Mammary epithelial cell (primary cell): ENCODE measurements at regions of chr4 and their contacts with region 1.

Region 1: DNA sequence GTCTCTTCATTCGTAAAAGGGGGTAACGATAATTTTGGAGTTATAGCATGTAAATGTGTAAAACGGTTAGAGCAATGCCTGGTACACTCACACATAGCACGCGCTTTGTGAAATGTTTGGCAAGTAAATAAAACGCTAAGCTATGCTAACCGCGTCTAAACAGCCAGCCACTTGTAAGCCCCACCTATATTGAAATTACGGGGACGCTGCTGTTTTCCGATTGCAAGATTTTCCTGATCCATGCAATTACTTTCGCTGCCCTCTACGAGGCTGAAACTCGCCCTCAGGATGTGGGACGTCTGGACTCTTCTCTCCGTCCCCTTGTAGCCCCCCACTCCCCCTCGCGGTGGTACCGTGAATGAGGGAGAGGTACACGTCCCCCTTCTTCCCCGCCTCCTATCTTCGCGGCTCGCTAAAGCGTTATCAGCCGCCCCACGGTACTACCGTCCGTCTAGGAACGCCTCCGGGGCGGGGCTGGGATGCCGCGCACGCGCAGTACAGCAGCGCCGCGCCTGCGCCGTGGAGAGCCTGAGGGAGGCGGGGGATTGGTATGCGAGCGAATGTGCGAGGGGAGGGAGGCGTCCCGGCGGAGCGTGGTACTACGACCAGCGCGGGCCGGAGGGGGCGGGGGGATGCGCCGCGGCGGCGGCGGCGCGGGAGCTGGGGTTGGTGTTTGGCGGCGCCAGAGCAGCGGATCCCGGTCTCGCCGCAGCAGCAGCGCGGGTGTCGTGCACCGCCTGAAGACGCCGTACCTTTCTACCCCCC is at the start of gene STIM2:
- DNase-seq: peak; percentile 97
- H3K4me3 ChIP-seq: peak within 1 kb of the TSS; percentile 61 to 80 (median 77)
- H3K27ac ChIP-seq: peak within 1 kb of the TSS; percentile 64
- H3K4me1 ChIP-seq: peaks cover 28% of the 10 kb centered on the region
- H3K27me3 ChIP-seq: no peaks in the 10 kb centered on the region
- CTCF ChIP-seq: peak in 1 of 2 donors; percentile 30
- total RNA-seq, gene STIM2: 37.9 to 56.0 TPM

Region 2: GRCh38 chr4:26410385-26411293 is 449.7 kb before region 1 on chr4:
- CTCF ChIA-PET with region 1: no interaction called
- dilution Hi-C with region 1: no loop called
- in situ Hi-C with region 1: no loop called
- intact Hi-C with region 1: no loop called
- DNase-seq: peak; percentile 42
- H3K4me3 ChIP-seq: no peak overlapping the region
- H3K27ac ChIP-seq: no peak overlapping the region
- H3K4me1 ChIP-seq: no peaks in the 10 kb centered on the region
- H3K27me3 ChIP-seq: no peaks in the 10 kb centered on the region
- CTCF ChIP-seq: peak; percentile 52 to 58

Region 3: GRCh38 chr4:26459054-26459755 is 401.1 kb before region 1 on chr4:
- CTCF ChIA-PET with region 1: no interaction called
- dilution Hi-C with region 1: no loop called
- in situ Hi-C with region 1: no loop called
- intact Hi-C with region 1: loop called (anchors 1 kb)
- DNase-seq: peak; percentile 44
- H3K4me3 ChIP-seq: no peak overlapping the region
- H3K27ac ChIP-seq: no peak overlapping the region
- H3K4me1 ChIP-seq: no peaks in the 10 kb centered on the region
- H3K27me3 ChIP-seq: no peaks in the 10 kb centered on the region
- CTCF ChIP-seq: peak; percentile 62 to 69

Region 4: DNA sequence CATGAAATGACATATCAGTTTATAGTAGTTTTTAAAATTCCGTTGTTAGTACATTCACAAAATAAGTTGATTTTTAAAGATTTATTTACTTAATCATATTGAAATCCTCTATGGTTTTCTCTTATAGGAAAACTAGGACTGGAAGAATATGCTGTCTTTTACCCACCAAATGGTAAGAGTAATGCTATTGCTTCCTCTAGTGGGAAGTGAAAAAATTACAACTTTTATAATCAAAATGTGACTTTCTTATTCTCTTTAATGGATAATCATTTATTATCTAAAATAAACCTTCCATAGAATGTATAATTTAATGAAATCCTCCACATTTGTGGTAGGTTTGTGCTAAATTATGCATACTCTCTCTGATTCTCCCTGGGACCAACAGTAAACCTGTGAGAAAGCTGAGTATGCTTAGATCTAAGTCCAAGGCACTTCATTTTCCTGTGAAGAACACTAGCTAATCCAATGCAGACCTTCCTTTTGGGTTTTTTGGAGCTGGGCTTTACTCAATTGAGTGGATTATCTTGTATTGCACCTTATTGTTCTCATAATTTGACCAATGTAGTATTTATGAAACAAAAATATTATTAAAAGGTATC is 140.3 kb before region 1 on chr4:
- CTCF ChIA-PET with region 1: no interaction called
- dilution Hi-C with region 1: no loop called
- in situ Hi-C with region 1: no loop called
- intact Hi-C with region 1: loop called (anchors 5 kb)
- DNase-seq: no peak
- H3K4me3 ChIP-seq: no peak overlapping the region
- H3K27ac ChIP-seq: no peak overlapping the region
- H3K4me1 ChIP-seq: peaks cover 10% of the 10 kb centered on the region
- H3K27me3 ChIP-seq: no peaks in the 10 kb centered on the region
- CTCF ChIP-seq: peak; percentile 57 to 72

Region 5: DNA sequence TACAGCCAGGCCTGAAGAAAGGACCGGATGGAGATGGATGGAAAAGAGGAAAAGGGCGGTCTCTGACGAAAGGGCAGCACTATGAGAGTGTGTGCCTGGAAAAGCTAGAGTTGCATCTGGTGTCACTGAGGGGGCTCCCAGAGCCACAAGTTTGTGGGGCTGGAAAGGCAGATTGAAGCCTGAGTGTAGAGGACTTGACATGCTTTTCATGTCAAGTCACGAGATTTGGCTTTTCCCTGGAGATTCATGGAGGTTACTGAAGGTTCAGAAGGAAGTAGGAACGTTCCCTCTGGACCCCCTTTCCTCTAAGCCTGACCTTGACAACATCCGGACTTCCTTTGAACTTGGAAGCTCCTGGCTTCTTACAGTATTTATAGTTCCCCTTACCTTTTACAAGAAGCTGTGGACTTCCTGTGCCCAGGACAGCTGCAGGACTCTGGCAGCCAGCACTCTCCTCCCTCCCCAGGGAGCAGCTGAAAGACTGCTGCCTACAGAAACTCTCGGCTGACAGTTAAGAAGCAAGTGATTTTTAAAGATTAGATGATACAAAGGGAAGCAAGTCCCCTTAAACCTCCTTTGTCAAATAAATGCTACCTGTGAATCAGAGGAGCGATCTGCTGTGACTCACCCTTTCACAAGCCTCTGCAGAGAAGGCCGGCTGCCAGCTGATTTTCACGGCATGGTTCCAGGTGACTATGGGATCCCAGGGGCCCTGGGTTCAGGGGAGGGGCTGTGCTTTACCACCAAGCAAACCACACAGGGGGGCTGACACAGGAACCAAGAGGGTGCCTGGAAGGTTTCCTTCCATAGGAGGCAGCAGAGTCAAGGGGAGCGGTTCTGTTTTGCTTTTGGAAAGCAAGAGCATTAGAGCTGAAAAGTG is 72.6 kb before region 1 on chr4:
- CTCF ChIA-PET with region 1: no interaction called
- dilution Hi-C with region 1: no loop called
- in situ Hi-C with region 1: no loop called
- intact Hi-C with region 1: loop called (anchors 2 kb)
- DNase-seq: peak; percentile 85
- H3K4me3 ChIP-seq: no peak overlapping the region
- H3K27ac ChIP-seq: peak overlapping the region; percentile 48
- H3K4me1 ChIP-seq: peaks cover 20% of the 10 kb centered on the region
- H3K27me3 ChIP-seq: no peaks in the 10 kb centered on the region
- CTCF ChIP-seq: peak in 1 of 2 donors; percentile 24

Region 6: GRCh38 chr4:26943391-26943790 is 83.1 kb after region 1 on chr4:
- CTCF ChIA-PET with region 1: no interaction called
- dilution Hi-C with region 1: loop called (anchors 5 kb)
- in situ Hi-C with region 1: no loop called
- intact Hi-C with region 1: no loop called
- DNase-seq: no peak
- H3K4me3 ChIP-seq: no peak overlapping the region
- H3K27ac ChIP-seq: no peak overlapping the region
- H3K4me1 ChIP-seq: no peaks in the 10 kb centered on the region
- H3K27me3 ChIP-seq: no peaks in the 10 kb centered on the region
- CTCF ChIP-seq: no peak

Region 7: DNA sequence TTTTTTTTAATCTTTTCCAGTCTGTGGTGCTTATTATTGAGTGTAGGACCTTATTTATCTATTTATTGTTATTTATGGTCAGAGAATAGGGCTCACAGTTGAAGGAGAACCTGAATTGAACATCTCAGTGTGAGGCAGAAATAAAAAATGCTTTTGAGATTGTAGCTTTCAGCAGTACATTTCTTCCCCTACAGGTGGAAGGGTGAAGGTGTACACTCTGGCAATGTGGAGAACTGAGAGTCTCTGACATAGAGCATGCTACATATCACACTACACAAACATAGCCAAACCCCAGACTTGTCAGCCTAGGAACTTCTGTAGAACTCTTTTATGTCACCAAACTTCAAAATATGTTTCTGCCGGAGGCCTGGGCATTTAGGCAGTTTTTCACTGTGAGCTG is 140.5 kb after region 1 on chr4:
- CTCF ChIA-PET with region 1: interaction called, 3 read pairs
- dilution Hi-C with region 1: loop called (anchors 5 kb)
- in situ Hi-C with region 1: loop called in 1 of 2 experiments (anchors 25 kb)
- intact Hi-C with region 1: loop called (anchors 2 kb)
- DNase-seq: peak; percentile 15
- H3K4me3 ChIP-seq: no peak overlapping the region
- H3K27ac ChIP-seq: no peak overlapping the region
- H3K4me1 ChIP-seq: peaks cover 1% of the 10 kb centered on the region
- H3K27me3 ChIP-seq: no peaks in the 10 kb centered on the region
- CTCF ChIP-seq: peak; percentile 44 to 64

Region 8: DNA sequence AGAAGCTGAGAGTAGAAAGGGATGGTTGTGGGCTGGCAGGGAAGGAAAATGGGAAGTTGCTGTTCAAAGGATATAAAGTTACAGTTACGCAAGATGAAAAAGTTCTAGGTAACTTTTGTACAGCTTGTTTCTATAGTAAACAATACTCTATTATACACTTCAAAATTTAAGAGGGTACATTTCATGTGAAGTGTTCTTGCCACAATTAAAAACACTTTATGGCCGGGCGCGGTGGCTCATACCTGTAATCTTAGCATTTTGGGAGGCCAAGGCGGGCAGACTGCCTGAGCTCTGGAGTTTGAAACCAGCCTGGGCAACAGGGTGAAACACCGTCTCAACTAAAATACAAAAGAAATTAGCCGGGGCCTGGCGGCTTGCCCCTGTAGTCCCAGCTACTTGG is 623.9 kb after region 1 on chr4:
- CTCF ChIA-PET with region 1: no interaction called
- dilution Hi-C with region 1: no loop called
- in situ Hi-C with region 1: no loop called
- intact Hi-C with region 1: no loop called
- DNase-seq: no peak
- H3K4me3 ChIP-seq: no peak overlapping the region
- H3K27ac ChIP-seq: no peak overlapping the region
- H3K4me1 ChIP-seq: no peaks in the 10 kb centered on the region
- H3K27me3 ChIP-seq: no peaks in the 10 kb centered on the region
- CTCF ChIP-seq: no peak

Region 9: GRCh38 chr4:27666943-27667342 is 806.6 kb after region 1 on chr4:
- CTCF ChIA-PET with region 1: no interaction called
- dilution Hi-C with region 1: no loop called
- in situ Hi-C with region 1: no loop called
- intact Hi-C with region 1: loop called (anchors 10 kb)
- DNase-seq: peak; percentile 3
- H3K4me3 ChIP-seq: no peak overlapping the region
- H3K27ac ChIP-seq: no peak overlapping the region
- H3K4me1 ChIP-seq: no peaks in the 10 kb centered on the region
- H3K27me3 ChIP-seq: no peaks in the 10 kb centered on the region
- CTCF ChIP-seq: no peak